ENCODE measurements at regions of chr20 and their contacts with region 1.

Region 1: GRCh38 chr20:31951530-31952453 is at the start of gene PDRG1:
- DNase-seq: peak; percentile 96 to 98 (median 97)
- ATAC-seq: peak; percentile 100
- H3K4me3 ChIP-seq: peak within 1 kb of the TSS; percentile 90
- H3K4me1 ChIP-seq: peaks cover 7% of the 10 kb centered on the region
- CTCF ChIP-seq: peak; percentile 96
- total RNA-seq, gene PDRG1: 9.2 to 10.0 (median 9.9) TPM

Region 2: DNA sequence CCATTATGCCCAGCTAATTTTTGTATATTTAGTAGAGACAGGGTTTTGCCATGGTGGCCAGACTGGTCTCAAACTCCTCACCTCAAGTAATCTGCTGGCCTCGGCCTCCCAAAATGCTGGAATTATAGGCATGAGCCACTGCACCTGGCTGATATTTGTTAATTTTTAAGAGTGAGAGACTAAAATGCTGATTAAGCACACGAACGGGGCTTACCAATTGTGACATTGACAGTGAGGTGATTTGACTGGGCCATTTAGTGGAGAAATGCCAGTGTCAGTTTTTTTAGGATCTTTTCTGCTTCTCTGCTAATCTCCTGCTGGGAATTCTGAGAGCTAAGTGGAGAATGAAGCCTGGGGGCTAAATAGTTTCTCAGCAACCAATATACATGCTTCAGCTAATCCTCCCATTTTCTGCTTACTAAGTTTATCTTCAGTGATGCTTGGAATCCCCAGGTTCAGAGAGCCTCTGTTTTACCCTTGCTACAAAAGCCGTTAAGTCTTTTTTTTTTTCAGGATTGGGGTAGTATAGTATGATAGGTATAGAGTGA is 521.1 kb before region 1 on chr20:
- intact Hi-C with region 1: no loop called
- DNase-seq: no peak
- ATAC-seq: no peak
- H3K4me3 ChIP-seq: no peak overlapping the region
- H3K4me1 ChIP-seq: no peaks in the 10 kb centered on the region
- CTCF ChIP-seq: no peak

Region 3: GRCh38 chr20:31859998-31860709 is 91.6 kb before region 1 on chr20:
- intact Hi-C with region 1: loop called in 1 of 2 experiments (anchors 10 kb)
- DNase-seq: peak in 1 of 3 donors; percentile 28
- ATAC-seq: peak; percentile 27
- H3K4me3 ChIP-seq: no peak overlapping the region
- H3K4me1 ChIP-seq: peaks cover 9% of the 10 kb centered on the region
- CTCF ChIP-seq: no peak